ENCODE measurements at regions of chr12 and their contacts with region 1.

Region 1: DNA sequence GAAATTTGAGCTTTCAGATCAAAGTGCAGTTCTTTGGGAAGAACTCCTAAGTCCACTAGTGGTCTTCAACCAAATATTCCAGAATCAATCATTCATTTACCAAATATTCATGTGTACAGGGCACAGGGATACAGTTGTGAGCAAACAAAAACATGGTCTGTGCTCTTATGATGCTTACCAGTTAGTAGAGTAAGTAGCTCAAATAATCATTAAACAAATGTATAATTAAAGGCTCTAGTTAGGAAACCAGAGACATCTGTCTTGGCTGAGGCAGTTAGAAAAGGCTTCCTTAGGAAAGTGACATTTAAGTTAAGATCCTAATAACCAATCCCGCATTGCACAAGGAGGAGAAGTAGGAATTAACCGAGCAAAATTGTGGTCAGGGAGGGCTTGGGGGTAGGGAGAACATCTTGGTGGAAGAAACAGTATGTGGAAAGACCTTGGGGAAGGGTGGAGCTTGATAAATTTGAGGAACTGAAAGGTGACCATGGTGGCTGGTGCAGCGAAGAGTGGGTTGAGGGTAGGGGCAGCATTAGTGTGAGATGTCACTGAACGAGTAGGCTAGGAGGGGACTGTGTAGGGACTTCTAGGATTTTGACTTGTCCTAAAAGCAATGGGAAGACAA is 40.0 kb downstream of the PEBP1 start:
- DNase-seq: no peak
- ATAC-seq: no peak
- H3K4me3 ChIP-seq: no peak overlapping the region
- H3K27ac ChIP-seq: no peak overlapping the region
- H3K4me1 ChIP-seq: no peaks in the 10 kb centered on the region
- H3K27me3 ChIP-seq: no peaks in the 10 kb centered on the region
- CTCF ChIP-seq: no peak

Region 2: DNA sequence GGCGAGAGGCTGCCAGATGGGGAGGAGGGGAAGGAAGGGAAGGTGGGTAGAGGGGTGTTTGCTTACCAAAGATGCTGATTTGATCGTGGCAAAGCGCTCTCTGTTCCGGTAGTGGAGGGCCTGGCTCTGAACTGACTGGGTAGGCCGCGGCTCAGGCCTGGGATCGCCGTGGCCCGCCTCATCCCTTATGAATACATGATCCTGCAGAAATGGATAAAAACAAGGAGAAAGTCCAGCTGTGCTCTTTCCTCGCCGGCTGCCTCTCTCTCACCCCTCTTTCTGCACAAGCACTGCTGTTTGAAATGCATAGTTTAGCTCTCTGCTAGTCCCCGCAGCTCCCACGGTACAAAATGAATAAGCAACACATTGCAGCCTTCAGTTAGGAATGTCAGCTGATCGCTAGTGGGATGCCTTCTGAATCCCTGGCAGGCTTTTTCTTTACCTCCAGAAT is 13.8 kb after region 1 on chr12:
- CTCF ChIA-PET with region 1: no interaction called
- POLR2A ChIA-PET with region 1: interaction called, 14 read pairs
- intact Hi-C with region 1: no loop called
- DNase-seq: no peak
- ATAC-seq: no peak
- H3K4me3 ChIP-seq: no peak overlapping the region
- H3K27ac ChIP-seq: no peak overlapping the region
- H3K4me1 ChIP-seq: peaks cover 8% of the 10 kb centered on the region; the same call in 1 of the 2 replicates
- H3K27me3 ChIP-seq: no peaks in the 10 kb centered on the region
- CTCF ChIP-seq: no peak